ENCODE measurements at regions of chr1 and their contacts with region 1.

Region 1: GRCh38 chr1:93304716-93305138 is 41.0 kb upstream of the DR1 start:
- DNase-seq: peak in 8 of 9 donors; percentile 24 to 72 (median 54)
- ATAC-seq: peak; percentile 78
- H3K4me3 ChIP-seq: no peak overlapping the region
- H3K4me3 Mint-ChIP-seq: no peak overlapping the region
- H3K27ac ChIP-seq: no peak overlapping the region
- H3K27ac Mint-ChIP-seq: no peak overlapping the region
- H3K4me1 ChIP-seq: no peaks in the 10 kb centered on the region
- H3K4me1 Mint-ChIP-seq: peaks cover 0 to 4% (median 0%) of the 10 kb centered on the region in 7 donors
- H3K27me3 ChIP-seq: no peaks in the 10 kb centered on the region
- H3K27me3 Mint-ChIP-seq: no peaks in the 10 kb centered on the region

Region 2: DNA sequence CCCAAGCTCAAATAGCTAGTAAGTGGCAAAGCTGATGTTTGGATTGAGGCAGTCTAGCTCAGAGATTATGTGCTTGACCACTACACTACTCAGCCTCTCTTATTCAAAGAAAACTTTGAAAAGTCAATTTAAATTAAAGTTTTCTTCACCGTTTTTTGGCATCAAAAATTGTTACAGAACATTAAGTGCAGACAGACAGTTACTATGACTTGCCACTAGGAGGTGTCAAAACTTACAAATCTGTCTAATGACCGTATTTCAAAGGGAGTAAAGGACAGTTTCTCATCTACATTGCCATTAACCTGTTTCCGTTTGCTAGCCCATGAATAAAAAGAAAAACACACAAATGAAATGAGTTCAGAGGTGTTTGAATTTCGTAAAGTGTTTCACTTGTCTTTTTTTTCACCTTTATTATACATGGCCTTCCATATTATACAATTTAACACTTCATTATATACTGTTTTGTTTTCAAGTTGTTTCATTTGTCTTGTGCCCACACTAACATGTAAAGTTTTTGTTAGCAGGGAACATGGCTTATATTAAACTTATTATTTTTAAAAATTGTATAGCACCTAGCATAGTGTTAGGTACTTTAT is 283.1 kb before region 1 on chr1:
- CTCF ChIA-PET with region 1: interaction called, 5 read pairs
- POLR2A ChIA-PET with region 1: no interaction called
- intact Hi-C with region 1: loop called (anchors 1 to 5 kb)
- DNase-seq: peak in 7 of 9 donors; percentile 16 to 64 (median 55)
- ATAC-seq: peak; percentile 78
- H3K4me3 ChIP-seq: no peak overlapping the region
- H3K4me3 Mint-ChIP-seq: no peak overlapping the region
- H3K27ac ChIP-seq: no peak overlapping the region
- H3K27ac Mint-ChIP-seq: no peak overlapping the region
- H3K4me1 ChIP-seq: peaks cover 0 to 4% of the 10 kb centered on the region in 2 donors
- H3K4me1 Mint-ChIP-seq: peaks cover 0 to 7% (median 5%) of the 10 kb centered on the region in 7 donors
- H3K27me3 ChIP-seq: no peaks in the 10 kb centered on the region
- H3K27me3 Mint-ChIP-seq: peaks cover 0 to 48% (median 3%) of the 10 kb centered on the region in 5 donors

Region 3: GRCh38 chr1:93358293-93358692 is 53.6 kb after region 1 on chr1:
- CTCF ChIA-PET with region 1: interaction called, 4 read pairs
- POLR2A ChIA-PET with region 1: no interaction called
- intact Hi-C with region 1: loop called in 1 of 2 experiments (anchors 2 kb)
- DNase-seq: no peak
- ATAC-seq: no peak
- H3K4me3 ChIP-seq: no peak overlapping the region
- H3K4me3 Mint-ChIP-seq: peak overlapping the region in 4 of 10 donors; percentile 0 to 42 (median 33)
- H3K27ac ChIP-seq: no peak overlapping the region
- H3K27ac Mint-ChIP-seq: peak overlapping the region in 8 of 9 donors; percentile 2 to 72 (median 50)
- H3K4me1 ChIP-seq: peaks cover 14 to 29% of the 10 kb centered on the region in 2 donors
- H3K4me1 Mint-ChIP-seq: peaks cover 37 to 85% (median 76%) of the 10 kb centered on the region in 7 donors
- H3K27me3 ChIP-seq: no peaks in the 10 kb centered on the region
- H3K27me3 Mint-ChIP-seq: no peaks in the 10 kb centered on the region

Region 4: GRCh38 chr1:93437976-93438605 is 133.4 kb after region 1 on chr1:
- CTCF ChIA-PET with region 1: no interaction called
- POLR2A ChIA-PET with region 1: no interaction called
- intact Hi-C with region 1: loop called (anchors 1 to 2 kb)
- DNase-seq: peak in 5 of 9 donors; percentile 24 to 48 (median 27)
- ATAC-seq: peak; percentile 61
- H3K4me3 ChIP-seq: no peak overlapping the region
- H3K4me3 Mint-ChIP-seq: no peak overlapping the region
- H3K27ac ChIP-seq: no peak overlapping the region
- H3K27ac Mint-ChIP-seq: no peak overlapping the region
- H3K4me1 ChIP-seq: no peaks in the 10 kb centered on the region
- H3K4me1 Mint-ChIP-seq: peaks cover 0 to 2% (median 0%) of the 10 kb centered on the region in 7 donors
- H3K27me3 ChIP-seq: peaks cover 0 to 4% of the 10 kb centered on the region in 2 donors
- H3K27me3 Mint-ChIP-seq: peaks cover 0 to 35% (median 7%) of the 10 kb centered on the region in 5 donors

Region 5: DNA sequence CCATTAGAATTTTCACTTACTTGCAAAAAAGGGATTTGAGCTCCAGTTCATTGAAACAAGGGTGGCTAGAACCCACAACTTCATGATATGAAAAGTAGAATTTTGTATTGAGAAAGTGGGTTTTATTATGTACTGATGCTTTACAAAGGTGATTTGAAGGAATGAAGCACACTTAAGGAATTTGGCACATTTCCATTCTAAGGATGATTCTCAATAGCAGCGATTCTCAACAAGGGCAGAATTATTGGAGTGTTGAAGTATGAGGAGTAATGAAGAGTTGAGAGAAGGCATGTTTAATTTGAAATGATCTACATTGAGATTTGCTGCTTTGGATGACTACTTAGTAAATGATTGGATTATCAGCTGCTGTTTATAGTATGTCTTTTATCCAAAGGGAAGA is 197.8 kb after region 1 on chr1:
- CTCF ChIA-PET with region 1: no interaction called
- POLR2A ChIA-PET with region 1: no interaction called
- intact Hi-C with region 1: no loop called
- DNase-seq: no peak
- ATAC-seq: no peak
- H3K4me3 ChIP-seq: no peak overlapping the region
- H3K4me3 Mint-ChIP-seq: no peak overlapping the region
- H3K27ac ChIP-seq: no peak overlapping the region
- H3K27ac Mint-ChIP-seq: no peak overlapping the region
- H3K4me1 ChIP-seq: no peaks in the 10 kb centered on the region
- H3K4me1 Mint-ChIP-seq: peaks cover 0 to 6% (median 0%) of the 10 kb centered on the region in 7 donors
- H3K27me3 ChIP-seq: no peaks in the 10 kb centered on the region
- H3K27me3 Mint-ChIP-seq: peaks cover 0 to 11% (median 5%) of the 10 kb centered on the region in 5 donors

Region 6: DNA sequence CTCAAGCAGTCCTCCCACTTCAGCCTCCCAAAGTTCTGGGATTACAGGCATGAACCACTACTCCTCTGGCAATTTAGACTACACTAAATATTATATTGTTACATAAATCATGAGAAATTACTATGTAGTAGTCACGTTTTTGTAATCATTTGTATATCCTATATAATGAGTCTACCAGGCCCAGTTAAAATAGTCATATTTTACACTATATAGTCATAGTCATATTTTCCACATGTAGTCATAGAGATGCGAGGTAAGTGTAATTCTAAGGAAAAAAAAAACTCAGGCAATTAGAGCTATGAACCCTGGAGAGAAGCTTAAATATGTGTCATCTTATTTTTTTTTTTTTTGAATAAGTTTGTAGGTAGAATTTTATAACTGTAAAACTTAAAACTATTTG is 233.2 kb after region 1 on chr1:
- CTCF ChIA-PET with region 1: no interaction called
- POLR2A ChIA-PET with region 1: no interaction called
- intact Hi-C with region 1: loop called in 1 of 2 experiments (anchors 10 kb)
- DNase-seq: no peak
- ATAC-seq: no peak
- H3K4me3 ChIP-seq: no peak overlapping the region
- H3K4me3 Mint-ChIP-seq: no peak overlapping the region
- H3K27ac ChIP-seq: no peak overlapping the region
- H3K27ac Mint-ChIP-seq: no peak overlapping the region
- H3K4me1 ChIP-seq: no peaks in the 10 kb centered on the region
- H3K4me1 Mint-ChIP-seq: no peaks in the 10 kb centered on the region
- H3K27me3 ChIP-seq: no peaks in the 10 kb centered on the region
- H3K27me3 Mint-ChIP-seq: peaks cover 0 to 17% (median 5%) of the 10 kb centered on the region in 5 donors

Region 7: DNA sequence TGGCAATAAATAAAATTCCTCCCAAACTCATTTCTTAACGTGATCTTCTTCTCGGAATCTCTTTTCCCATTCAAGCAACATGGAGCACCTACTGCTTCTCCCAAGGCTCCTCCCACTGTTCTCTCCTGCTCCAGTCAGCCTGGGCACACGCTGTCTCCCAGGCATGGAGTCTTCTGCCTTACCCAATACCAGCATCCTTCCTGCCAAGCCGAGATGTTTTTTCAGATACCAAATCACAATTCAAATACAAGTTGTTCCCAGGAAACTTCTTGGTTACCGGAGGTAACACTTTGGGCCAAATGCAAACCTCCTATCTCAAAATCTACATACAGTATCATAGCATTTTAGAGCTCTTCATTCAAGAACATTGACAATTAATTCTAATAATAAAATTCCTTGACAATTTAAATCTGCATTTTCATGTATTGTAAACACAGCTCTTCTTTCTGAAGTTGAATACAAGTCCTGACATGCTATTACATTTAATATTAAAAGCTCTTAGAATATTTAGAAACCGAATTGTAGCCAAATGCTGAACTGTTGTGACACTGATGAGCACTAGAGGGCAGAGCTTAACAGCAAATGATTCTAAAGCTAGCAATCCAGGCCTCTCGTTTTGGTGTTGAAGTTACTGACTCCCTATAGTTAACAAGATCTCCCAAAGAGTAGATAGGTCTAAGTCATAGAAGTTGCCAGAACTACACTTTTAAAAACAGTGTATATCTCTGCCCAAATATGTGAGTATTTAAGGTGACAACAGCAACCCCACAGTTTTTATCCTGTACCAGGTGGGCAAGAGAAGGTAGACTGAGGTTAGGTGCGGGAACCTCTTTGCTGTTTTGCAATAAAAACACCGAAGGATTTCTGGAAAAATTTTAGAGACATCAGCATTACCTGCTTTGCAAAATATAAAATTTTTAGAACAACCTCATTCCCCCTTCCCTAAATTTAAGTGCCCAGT is 324.7 kb after region 1 on chr1:
- CTCF ChIA-PET with region 1: interaction called, 10 read pairs
- POLR2A ChIA-PET with region 1: no interaction called
- intact Hi-C with region 1: loop called in 1 of 2 experiments (anchors 1 kb)
- DNase-seq: peak in 8 of 9 donors; percentile 22 to 69 (median 56)
- ATAC-seq: peak; percentile 89
- H3K4me3 ChIP-seq: no peak overlapping the region
- H3K4me3 Mint-ChIP-seq: no peak overlapping the region
- H3K27ac ChIP-seq: no peak overlapping the region
- H3K27ac Mint-ChIP-seq: no peak overlapping the region
- H3K4me1 ChIP-seq: no peaks in the 10 kb centered on the region
- H3K4me1 Mint-ChIP-seq: no peaks in the 10 kb centered on the region
- H3K27me3 ChIP-seq: no peaks in the 10 kb centered on the region
- H3K27me3 Mint-ChIP-seq: peaks cover 0 to 10% (median 0%) of the 10 kb centered on the region in 5 donors

Region 8: DNA sequence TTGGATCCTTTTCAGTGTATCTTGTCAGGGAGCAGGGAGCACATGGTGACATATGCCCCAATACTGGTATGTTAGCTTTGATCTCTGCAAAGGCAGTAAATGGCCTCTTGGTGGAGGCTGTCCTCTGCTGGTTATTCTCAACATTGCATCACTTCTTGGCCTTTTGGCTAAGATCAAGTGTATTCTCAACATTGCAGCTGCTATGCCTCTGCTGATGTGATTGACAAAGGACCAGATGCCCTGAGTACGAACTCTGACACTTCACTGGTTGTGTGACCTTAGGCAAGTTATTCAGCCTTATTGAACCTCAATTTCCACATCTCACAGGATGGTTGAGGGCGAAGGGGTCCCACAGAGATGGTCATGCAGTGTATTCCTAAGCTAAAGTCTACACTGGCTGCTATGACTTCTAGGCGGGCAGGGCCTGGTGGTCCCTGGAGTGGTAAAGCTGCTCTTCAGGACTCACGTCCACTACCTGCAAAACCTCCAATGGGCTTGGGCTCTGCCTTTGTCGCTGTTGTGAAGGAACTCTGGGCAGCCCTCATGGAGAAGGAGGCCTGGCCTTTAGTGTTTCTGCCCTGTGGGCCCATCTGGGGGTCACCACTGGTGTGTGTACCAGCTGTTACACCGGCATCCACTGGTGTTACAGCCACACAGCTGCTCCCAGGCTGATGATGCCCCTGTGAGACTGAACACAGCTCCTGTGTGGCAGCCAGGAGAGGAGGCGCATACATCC is 509.5 kb after region 1 on chr1:
- CTCF ChIA-PET with region 1: interaction called, 4 read pairs
- POLR2A ChIA-PET with region 1: no interaction called
- intact Hi-C with region 1: loop called in 1 of 2 experiments (anchors 1 kb)
- DNase-seq: peak in 8 of 9 donors; percentile 18 to 55 (median 36)
- ATAC-seq: peak; percentile 70
- H3K4me3 ChIP-seq: no peak overlapping the region
- H3K4me3 Mint-ChIP-seq: no peak overlapping the region
- H3K27ac ChIP-seq: no peak overlapping the region
- H3K27ac Mint-ChIP-seq: no peak overlapping the region
- H3K4me1 ChIP-seq: peaks cover 0 to 11% of the 10 kb centered on the region in 2 donors
- H3K4me1 Mint-ChIP-seq: peaks cover 19 to 23% (median 21%) of the 10 kb centered on the region in 7 donors
- H3K27me3 ChIP-seq: no peaks in the 10 kb centered on the region
- H3K27me3 Mint-ChIP-seq: peaks cover 0 to 2% (median 0%) of the 10 kb centered on the region in 5 donors